Sciatic nerve (tissue), 2 donors: ENCODE measurements at regions of chr10 and their contacts with region 1.

Region 1: GRCh38 chr10:33010132-33011037 is 52.4 kb upstream of the ITGB1 start:
- DNase-seq: no peak
- ATAC-seq: no peak

Region 2: DNA sequence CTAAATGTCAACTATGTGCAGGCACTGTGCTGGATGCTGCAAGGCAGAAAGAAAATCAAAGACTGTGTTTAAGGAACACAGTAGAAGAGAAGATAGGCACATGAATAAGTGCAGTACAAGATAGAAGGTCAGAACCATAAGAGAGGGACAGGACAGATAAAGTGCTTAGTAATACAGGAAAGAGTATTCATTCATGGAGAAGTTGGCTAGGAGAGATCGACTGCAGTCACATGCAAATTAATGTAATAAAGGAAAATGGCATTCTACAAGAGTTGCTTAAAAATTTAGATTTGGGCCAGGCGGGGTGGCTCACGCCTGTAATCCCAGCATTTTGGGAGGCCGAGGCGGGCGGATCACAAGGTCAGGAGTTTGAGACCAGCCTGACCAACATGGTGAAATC is 979.0 kb before region 1 on chr10:
- intact Hi-C with region 1: no loop called
- DNase-seq: no peak
- ATAC-seq: no peak

Region 3: DNA sequence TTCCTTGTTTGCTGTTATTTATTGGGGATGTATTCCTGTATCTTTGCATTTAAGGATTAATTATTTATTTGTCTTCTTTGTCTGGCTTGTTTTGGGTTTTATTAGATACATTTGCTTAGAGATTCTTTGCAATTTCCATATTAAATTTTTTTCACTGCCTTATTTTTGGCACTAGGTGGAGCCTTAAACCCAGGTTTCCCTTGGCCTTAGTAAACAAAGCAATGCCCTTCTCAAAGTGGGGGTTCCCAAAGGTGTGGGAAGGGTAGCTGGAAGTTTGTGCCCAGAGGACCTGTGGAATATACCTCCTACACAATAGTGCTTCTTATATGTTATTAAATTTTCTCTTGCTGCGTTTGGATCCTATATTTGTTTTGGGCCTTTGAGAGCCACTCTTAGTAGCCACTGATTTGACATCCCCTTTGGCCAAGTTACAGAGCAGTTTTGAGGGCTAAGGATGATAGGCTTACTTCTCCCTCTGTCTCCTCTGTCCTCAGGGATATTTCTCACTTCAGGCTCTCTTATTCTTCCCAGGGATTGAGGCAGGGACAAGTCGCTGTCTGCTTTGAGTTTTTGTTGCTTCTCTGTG is 214.7 kb before region 1 on chr10:
- intact Hi-C with region 1: loop called (anchors 5 kb)
- DNase-seq: no peak
- ATAC-seq: peak; percentile 52